HepG2 (cell line): ENCODE measurements at regions of chr7 and their contacts with region 1.

Region 1: DNA sequence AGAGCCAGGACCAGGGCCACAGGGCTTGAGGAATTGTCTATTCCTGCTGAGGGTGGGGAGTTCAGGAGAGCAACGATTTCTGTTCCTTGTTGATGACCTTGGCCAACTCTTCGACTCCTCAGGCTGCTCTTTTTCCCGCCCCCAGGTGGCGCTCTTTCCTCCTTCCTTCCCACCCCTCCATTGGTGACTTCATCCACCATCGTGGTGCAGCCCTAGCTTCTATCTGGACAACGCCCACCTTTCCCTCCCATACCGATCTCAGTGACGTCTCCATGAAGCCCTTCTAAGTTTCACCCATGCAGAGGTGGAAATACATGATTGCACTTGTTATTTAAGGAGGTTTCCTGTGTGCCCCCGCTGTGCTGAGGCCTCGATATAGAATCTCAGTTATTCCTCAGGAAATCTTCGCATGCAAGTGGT is 22.1 kb upstream of the CARD11 start:
- DNase-seq: peak; percentile 11
- ATAC-seq: peak; percentile 58
- H3K4me3 ChIP-seq: no peak overlapping the region
- H3K27ac ChIP-seq: no peak overlapping the region
- H3K4me1 ChIP-seq: no peaks in the 10 kb centered on the region
- H3K27me3 ChIP-seq: peaks cover 0 to 6% of the 10 kb centered on the region in 2 experiments; a peak in 1 of 5 replicates
- CTCF ChIP-seq: peak; percentile 55
- EP300 ChIP-seq: no peak
- POLR2A ChIP-seq: no peak
- RAD21 ChIP-seq: no peak

Region 2: DNA sequence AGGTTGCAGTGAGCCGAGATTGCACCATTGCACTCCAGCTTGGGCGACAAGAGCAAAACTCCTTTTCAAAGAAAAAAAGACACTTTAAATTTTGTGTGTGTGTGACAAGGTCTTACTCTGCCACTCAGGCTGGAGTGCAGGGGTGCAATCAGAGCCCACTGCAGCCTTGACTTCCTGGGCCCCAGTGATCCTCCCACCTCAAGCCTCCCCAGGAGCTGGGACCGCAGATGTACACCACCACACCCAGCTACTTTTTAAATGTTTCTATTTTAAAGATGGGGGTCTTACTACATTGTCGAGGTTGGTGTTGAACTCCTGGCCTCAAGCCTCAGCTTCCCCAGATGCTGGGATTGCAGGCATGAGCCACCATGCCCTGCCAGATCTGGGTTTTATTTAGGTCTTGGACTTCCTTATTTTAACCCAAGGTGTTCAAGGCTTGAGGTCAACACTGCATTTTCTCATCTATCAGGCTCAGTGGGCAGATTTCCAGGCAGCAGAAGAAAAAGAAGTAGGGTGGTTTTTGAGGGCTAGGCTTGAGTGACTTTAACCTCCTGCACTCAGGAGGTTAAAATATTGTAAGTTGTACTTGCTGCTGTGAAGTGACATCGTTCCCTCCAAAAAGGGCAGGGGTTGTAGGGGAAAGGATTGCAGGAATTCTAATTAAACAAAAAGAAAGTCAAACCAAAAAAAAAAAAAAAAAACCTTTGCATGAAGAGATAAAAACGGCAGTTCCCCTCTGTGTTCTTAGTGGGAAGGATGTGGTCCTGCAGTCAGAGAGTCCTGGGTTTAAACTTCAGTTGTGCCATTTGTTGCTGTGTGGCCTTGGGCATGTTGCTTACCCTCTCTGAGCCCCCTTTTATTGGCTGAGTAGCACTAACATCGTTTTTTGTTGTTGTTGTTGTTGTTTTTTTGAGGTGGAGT is 93.6 kb before region 1 on chr7:
- CTCF ChIA-PET with region 1: no interaction called
- POLR2A ChIA-PET with region 1: no interaction called
- in situ Hi-C with region 1: no loop called
- intact Hi-C with region 1: no loop called
- DNase-seq: no peak
- ATAC-seq: no peak
- H3K4me3 ChIP-seq: no peak overlapping the region
- H3K27ac ChIP-seq: no peak overlapping the region
- H3K4me1 ChIP-seq: no peaks in the 10 kb centered on the region
- H3K27me3 ChIP-seq: peaks cover 0 to 4% of the 10 kb centered on the region in 2 experiments; a peak in 1 of 5 replicates
- CTCF ChIP-seq: no peak
- EP300 ChIP-seq: no peak
- POLR2A ChIP-seq: no peak
- RAD21 ChIP-seq: no peak

Region 3: DNA sequence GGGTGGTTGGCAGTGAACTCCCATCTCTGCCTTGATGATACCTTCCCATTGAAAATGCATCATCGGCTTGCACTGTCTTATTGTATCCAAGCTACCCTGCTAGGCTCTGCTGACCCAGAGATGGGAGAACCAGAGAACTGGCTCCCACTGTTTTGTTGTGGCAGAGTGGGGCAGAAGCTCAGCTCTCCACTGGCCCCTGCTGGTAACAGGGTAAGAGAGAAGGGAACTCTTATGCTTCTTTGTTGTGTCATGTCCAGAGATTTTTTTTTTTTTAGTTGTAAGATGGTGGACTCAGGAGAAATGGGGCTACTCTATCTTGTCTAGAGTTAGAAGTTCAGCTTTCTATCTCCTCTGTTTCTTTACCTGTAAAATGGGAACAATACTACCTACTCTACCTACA is 134.8 kb after region 1 on chr7:
- CTCF ChIA-PET with region 1: interaction called, 11 read pairs
- POLR2A ChIA-PET with region 1: no interaction called
- in situ Hi-C with region 1: no loop called
- intact Hi-C with region 1: loop called (anchors 1 kb)
- DNase-seq: peak; percentile 65
- ATAC-seq: peak; percentile 89
- H3K4me3 ChIP-seq: no peak overlapping the region
- H3K27ac ChIP-seq: no peak overlapping the region
- H3K4me1 ChIP-seq: peaks cover 25% of the 10 kb centered on the region
- H3K27me3 ChIP-seq: no peaks in the 10 kb centered on the region
- CTCF ChIP-seq: peak; percentile 77
- EP300 ChIP-seq: no peak
- POLR2A ChIP-seq: no peak
- RAD21 ChIP-seq: peak; percentile 36; the same call in 1 of the 2 replicates